Pancreas (tissue), 10 donors: ENCODE measurements at regions of chr5 and their contacts with region 1.

Region 1: DNA sequence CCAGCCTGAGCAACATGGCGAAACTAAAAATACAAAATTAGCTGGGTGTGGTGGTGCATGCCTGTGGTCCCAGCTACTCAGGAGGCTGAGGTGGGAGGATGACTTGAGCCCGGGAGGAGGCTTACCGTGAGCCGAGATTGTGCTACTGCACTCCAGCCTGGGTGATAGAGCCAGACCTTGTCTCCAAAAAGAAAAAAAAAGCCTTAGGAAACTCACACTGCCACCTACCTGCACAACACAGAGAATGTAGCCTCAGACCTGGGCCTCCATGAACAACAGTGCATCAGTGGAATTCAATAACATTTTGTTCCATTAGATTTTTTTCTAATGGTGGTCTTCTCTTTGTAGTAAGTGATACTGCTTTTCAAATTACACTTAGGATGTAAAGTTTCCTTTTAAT is 63.8 kb upstream of the RARS1 start:
- DNase-seq: no peak
- ATAC-seq: peak in 3 of 4 donors; percentile 67 to 79 (median 72)
- H3K4me3 ChIP-seq: no peak overlapping the region
- H3K27ac ChIP-seq: no peak overlapping the region
- H3K4me1 ChIP-seq: no peaks in the 10 kb centered on the region
- H3K27me3 ChIP-seq: no peaks in the 10 kb centered on the region
- CTCF ChIP-seq: no peak

Region 2: GRCh38 chr5:168268949-168269943 is 153.2 kb before region 1 on chr5:
- intact Hi-C with region 1: loop called in 2 of 3 experiments (anchors 5 kb)
- DNase-seq: peak; percentile 81 to 94 (median 90)
- ATAC-seq: peak; percentile 88 to 97 (median 96)
- H3K4me3 ChIP-seq: peak overlapping the region in 2 of 4 donors; percentile 26 to 31
- H3K27ac ChIP-seq: no peak overlapping the region
- H3K4me1 ChIP-seq: peaks cover 0 to 6% (median 0%) of the 10 kb centered on the region in 3 donors
- H3K27me3 ChIP-seq: no peaks in the 10 kb centered on the region
- CTCF ChIP-seq: peak; percentile 75 to 90 (median 82)